Right ventricle myocardium inferior (tissue), 1 donor: ENCODE measurements at regions of chr10 and their contacts with region 1.

Region 1: DNA sequence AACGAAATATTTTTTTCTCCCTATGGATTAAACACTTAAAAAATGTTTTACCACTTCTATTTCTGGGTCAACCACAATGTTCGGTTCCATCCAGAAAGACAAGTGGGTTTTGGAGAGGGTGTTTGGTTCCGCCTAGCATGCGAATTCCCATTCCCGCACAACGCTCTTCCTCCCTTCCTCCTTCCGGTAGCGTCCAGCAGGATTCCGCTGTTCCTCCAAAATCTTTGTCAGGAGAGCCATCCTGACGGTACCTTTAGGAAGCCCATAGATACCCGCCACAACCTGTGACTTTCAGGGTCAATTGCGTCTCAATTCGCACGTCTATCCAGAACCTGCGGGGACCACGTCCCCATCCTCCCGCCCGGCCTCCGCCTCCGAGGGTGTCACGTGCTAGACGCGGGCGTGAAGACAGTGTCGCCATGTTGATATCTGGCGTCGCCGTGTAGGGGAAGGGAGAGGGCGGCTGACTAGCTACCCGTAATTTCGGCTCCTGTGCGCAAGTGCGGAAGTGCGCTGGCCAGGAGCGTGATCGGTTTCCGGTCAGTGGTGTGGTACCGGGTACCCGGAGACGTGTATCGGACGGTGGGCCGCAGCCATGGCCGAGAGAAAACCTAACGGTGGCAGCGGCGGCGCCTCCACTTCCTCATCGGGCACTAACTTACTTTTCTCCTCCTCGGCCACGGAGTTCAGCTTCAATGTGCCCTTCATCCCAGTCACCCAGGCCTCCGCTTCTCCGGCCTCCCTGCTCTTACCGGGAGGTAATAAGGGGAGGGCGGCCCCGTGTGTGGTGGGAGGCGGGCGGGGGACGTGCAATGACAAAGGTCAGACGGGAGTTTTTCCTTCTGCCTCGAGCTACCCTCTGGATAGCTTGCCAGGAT is at the start of gene SEC23IP:
- DNase-seq: peak; percentile 99
- ATAC-seq: peak; percentile 99
- total RNA-seq, gene SEC23IP: 23.5 TPM

Region 2: GRCh38 chr10:119567978-119568377 is 324.4 kb before region 1 on chr10:
- intact Hi-C with region 1: no loop called
- DNase-seq: no peak
- ATAC-seq: no peak

Region 3: DNA sequence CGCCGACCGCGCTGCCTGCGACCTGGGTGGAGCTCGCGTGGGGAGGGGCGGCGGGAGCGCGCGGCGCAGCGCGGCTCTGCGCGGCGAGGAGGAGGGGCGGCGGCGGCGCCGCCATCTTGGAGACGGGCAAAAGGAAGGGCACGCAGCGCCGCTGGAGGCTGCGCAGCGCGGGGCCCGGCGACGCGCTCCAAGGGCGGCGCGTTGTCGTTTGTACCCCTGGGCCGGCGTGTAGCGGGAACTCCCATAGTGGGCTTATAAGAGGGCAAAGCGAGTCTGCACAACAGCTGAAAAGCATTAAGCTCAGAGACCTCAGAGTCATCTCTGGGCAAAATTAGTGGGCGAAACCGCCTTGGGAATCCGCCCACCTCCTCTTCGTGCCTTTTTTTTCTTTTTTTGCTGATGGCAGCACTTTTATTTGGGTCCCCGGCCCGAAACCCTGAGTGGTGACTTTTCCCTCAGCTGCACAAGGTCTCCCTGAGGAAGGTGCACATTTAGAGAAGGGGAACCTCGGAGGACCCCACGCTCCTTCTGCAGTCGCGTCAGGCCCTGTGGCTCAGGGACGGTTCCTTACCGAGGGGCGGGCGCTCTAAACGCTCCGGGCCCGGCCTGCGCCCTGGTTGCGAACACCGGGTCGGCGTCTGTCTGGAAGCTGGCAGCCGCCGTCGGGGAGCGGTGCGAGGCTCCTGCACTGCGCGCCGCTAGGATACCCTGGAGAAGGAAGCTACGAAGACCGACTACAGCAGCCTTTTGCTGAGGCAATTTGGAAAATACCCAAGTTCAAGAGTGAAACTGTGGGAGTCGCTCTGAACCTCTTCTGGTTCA is 19.4 kb before region 1 on chr10:
- intact Hi-C with region 1: loop called (anchors 1 kb)
- DNase-seq: peak; percentile 97
- ATAC-seq: peak; percentile 99

Region 4: DNA sequence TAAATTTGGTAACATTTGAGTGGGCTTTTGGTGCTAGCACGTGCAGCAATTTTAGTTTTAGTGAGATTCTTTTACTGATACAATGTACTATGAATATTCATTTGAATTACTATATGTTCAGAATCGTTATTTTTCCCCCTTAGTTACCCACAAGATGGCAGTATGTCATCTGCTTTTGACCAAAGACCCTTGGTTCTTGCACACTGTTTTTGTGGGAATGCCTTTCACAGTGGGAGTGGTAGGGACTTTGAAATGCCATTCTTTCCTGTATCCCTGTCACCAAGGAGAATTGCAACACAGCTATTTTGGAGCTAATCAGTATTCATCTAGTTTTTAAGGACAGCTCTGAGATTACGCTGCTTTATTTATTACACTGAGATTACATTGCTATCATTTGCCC is 40.8 kb after region 1 on chr10:
- intact Hi-C with region 1: no loop called
- DNase-seq: no peak
- ATAC-seq: no peak